ENCODE measurements at regions of chr7 and their contacts with region 1.

Region 1: GRCh38 chr7:116258734-116259133 is 48.4 kb downstream of the TES start:
- DNase-seq: peak; percentile 63
- ATAC-seq: peak; percentile 51
- H3K4me3 ChIP-seq: no peak overlapping the region
- H3K4me3 Mint-ChIP-seq: no peak overlapping the region
- H3K27ac ChIP-seq: no peak overlapping the region
- H3K27ac Mint-ChIP-seq: no peak overlapping the region
- H3K4me1 ChIP-seq: no peaks in the 10 kb centered on the region
- H3K4me1 Mint-ChIP-seq: peaks cover 2% of the 10 kb centered on the region
- H3K27me3 ChIP-seq: no peaks in the 10 kb centered on the region
- H3K27me3 Mint-ChIP-seq: no peaks in the 10 kb centered on the region
- CTCF ChIP-seq: peak; percentile 86

Region 2: GRCh38 chr7:116242178-116242577 is 16.6 kb before region 1 on chr7:
- CTCF ChIA-PET with region 1: interaction called, 28 read pairs
- POLR2A ChIA-PET with region 1: no interaction called
- intact Hi-C with region 1: loop called (anchors 2 kb)
- DNase-seq: no peak
- ATAC-seq: no peak
- H3K4me3 ChIP-seq: no peak overlapping the region
- H3K4me3 Mint-ChIP-seq: no peak overlapping the region
- H3K27ac ChIP-seq: no peak overlapping the region
- H3K27ac Mint-ChIP-seq: no peak overlapping the region
- H3K4me1 ChIP-seq: no peaks in the 10 kb centered on the region
- H3K4me1 Mint-ChIP-seq: peaks cover 15% of the 10 kb centered on the region
- H3K27me3 ChIP-seq: no peaks in the 10 kb centered on the region
- H3K27me3 Mint-ChIP-seq: no peaks in the 10 kb centered on the region
- CTCF ChIP-seq: no peak

Region 3: GRCh38 chr7:116582806-116583444 is 324.2 kb after region 1 on chr7:
- CTCF ChIA-PET with region 1: interaction called, 144 read pairs
- POLR2A ChIA-PET with region 1: no interaction called
- intact Hi-C with region 1: no loop called
- DNase-seq: no peak
- ATAC-seq: no peak
- H3K4me3 ChIP-seq: peak overlapping the region in 2 of 5 experiments; percentile 9 to 36
- H3K4me3 Mint-ChIP-seq: peak overlapping the region; percentile 72
- H3K27ac ChIP-seq: peak overlapping the region in 1 of 2 donors; percentile 32
- H3K27ac Mint-ChIP-seq: peak overlapping the region; percentile 18
- H3K4me1 ChIP-seq: peaks cover 13 to 16% of the 10 kb centered on the region in 2 donors
- H3K4me1 Mint-ChIP-seq: peaks cover 16% of the 10 kb centered on the region
- H3K27me3 ChIP-seq: no peaks in the 10 kb centered on the region
- H3K27me3 Mint-ChIP-seq: no peaks in the 10 kb centered on the region
- CTCF ChIP-seq: no peak

Measured in B cell (primary cell).